Activated T-helper 2 cell treated with anti-CD3 and anti-CD28 coated beads, Interferon-gamma antibody, Interleukin-2, Interleukin-4, amounts not matched to agents 10 μg/mL and 5 μg/mL and 100 μg/mL, durations not matched to agents 14 hours and 24 hours and 36 hours (primary cell): ENCODE measurements at regions of chr17 and their contacts with region 1.

Region 1: GRCh38 chr17:78708510-78708973 is 73.5 kb downstream of the CYTH1 start:
- DNase-seq: peak; percentile 45
- H3K4me3 Mint-ChIP-seq: peak overlapping the region; percentile 66
- H3K27ac Mint-ChIP-seq: peak overlapping the region; percentile 75
- H3K4me1 Mint-ChIP-seq: peaks cover 48% of the 10 kb centered on the region
- H3K27me3 Mint-ChIP-seq: no peaks in the 10 kb centered on the region

Region 2: DNA sequence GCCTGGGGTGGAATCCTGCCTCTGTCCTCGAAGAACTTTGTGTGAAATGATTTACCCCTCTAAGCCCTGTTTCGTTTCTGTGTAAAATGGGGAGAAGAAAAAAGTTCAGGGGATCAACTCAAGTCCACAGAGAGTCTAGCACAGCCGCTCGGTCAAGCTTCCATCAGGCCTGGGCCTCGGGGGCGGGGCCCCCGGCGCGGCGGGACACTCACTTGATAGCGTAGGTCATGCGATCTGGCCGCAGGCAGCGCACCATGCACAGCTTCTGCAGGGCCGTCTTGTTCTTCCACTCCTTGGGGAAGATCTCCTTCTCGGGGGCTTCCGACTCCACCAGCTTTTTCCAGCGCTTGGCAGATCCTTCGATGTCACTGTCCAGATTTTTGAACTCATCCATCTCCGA is 264.1 kb before region 1 on chr17:
- intact Hi-C with region 1: loop called (anchors 2 kb)
- DNase-seq: no peak
- H3K4me3 Mint-ChIP-seq: no peak overlapping the region
- H3K27ac Mint-ChIP-seq: no peak overlapping the region
- H3K4me1 Mint-ChIP-seq: no peaks in the 10 kb centered on the region
- H3K27me3 Mint-ChIP-seq: no peaks in the 10 kb centered on the region

Region 3: DNA sequence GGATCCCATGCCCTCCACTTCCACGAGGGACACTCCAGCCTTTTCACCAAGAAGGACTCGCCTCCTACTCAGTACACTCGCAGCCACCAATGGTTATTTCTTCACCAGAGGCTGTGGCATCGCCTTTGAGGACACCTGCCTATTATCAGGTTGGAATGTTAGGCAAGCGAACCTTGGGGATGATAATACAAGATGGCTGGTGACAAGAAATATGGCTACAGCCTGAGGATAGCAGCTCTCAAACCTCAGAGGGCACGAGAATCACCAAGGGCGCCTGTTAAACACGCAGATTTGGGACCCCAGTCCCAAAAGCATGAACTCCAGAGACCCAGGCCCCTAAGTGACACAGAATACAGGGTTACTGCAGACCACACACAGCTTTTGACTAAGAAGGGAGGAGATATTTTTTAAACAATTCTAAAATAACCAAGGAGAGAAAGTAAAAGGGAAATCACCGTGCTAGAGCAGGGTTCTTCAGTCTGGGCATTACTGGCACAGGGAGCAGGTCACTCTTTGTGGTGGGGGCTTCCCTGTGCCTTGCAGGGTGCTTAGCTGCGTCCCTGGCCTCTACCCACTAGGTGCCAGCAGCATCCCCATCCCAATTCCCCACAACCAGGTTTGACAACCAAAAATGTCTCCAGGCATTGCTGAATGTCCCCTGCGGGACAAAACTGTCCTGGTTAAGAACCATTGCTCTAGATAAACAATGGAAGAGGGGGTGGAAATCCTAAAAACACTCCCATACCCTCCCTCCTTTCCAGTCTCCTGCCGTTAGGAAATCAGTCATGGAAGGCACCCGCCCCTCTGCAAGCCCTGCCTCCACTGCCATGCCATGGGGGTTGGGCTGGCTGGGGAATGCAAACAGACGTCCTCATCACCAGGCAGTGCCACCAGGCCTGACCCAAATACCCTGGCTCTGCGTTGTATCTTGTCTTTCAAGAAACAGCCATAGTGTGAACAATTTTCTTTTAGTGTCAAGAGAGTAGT is 15.7 kb after region 1 on chr17:
- intact Hi-C with region 1: loop called (anchors 1 kb)
- DNase-seq: no peak
- H3K4me3 Mint-ChIP-seq: no peak overlapping the region
- H3K27ac Mint-ChIP-seq: peak overlapping the region; percentile 9
- H3K4me1 Mint-ChIP-seq: peaks cover 70% of the 10 kb centered on the region
- H3K27me3 Mint-ChIP-seq: no peaks in the 10 kb centered on the region

Region 4: DNA sequence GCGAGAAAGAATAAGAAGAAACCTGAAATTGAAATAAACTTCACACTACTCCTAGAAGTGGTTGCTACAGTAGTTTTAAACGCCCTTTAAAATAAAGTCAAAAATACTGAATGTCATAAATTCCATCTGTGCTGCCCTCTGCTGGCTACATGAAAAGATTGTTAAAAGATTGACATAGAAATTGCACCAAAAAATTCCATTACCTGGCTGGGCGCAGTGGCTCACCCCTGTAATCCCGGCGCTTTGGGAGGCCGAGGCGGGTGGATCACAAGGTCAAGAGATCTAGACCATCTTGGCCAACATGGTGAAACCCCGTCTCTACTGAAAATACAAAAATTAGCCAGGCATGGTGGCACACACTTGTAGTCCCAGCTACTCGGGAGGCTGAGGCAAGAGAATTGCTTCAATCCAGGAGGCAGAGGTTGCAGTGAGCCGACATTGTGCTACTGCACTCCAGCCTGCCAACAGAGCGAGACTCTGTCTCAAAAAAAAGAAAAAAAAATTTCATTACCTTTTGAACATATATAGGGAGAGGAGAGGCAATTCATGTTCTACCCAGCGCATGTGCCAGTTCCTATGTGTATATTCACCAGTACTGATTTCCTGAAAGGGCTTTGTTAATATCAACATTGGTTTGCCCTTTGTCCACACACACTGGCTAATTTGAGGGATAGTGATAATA is 37.0 kb after region 1 on chr17:
- intact Hi-C with region 1: loop called (anchors 2 kb)
- DNase-seq: no peak
- H3K4me3 Mint-ChIP-seq: no peak overlapping the region
- H3K27ac Mint-ChIP-seq: peak overlapping the region; percentile 55
- H3K4me1 Mint-ChIP-seq: peaks cover 74% of the 10 kb centered on the region
- H3K27me3 Mint-ChIP-seq: no peaks in the 10 kb centered on the region